ENCODE measurements at regions of chr5 and their contacts with region 1.

Region 1: DNA sequence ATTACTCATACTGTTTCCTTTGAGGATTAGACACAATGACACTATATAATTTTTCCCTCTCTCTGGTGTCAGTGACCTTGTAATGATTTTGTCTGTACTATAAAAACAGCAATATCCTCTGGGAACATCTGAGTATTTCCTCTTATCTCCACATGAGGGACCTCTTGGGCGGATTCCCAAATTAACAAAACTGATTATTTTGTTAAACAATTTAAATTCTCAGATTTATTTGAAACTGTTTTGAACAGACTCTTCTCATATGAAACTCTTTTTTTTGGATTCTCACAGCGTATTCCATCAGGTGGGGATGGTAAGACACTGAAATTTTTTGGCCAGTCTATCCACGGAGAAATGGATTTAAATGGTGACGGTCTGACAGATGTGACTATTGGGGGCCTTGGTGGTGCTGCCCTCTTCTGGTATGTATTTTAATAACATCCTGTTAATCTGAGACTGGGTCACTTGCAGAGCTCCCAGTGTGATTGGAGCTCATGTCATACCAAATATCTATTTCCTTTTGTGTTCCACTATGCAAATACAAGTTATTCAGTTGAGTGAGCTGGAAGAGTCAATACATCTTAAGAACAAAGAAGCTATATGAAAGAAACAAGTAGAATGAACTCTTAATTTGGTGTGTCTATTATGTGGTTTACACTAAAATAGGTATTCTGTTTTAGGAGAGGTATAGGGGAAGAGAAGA is 73.8 kb upstream of the ITGA2 start:
- DNase-seq: peak; percentile 82
- H3K4me3 Mint-ChIP-seq: peak overlapping the region; percentile 68
- H3K27ac Mint-ChIP-seq: no peak overlapping the region
- H3K4me1 Mint-ChIP-seq: no peaks in the 10 kb centered on the region
- H3K27me3 Mint-ChIP-seq: no peaks in the 10 kb centered on the region
- CTCF ChIP-seq: peak; percentile 78

Region 2: GRCh38 chr5:52693280-52693679 is 222.0 kb before region 1 on chr5:
- CTCF ChIA-PET with region 1: interaction called, 77 read pairs
- POLR2A ChIA-PET with region 1: interaction called, 5 read pairs
- intact Hi-C with region 1: loop called (anchors 1 kb)
- DNase-seq: peak; percentile 55
- H3K4me3 Mint-ChIP-seq: no peak overlapping the region
- H3K27ac Mint-ChIP-seq: no peak overlapping the region
- H3K4me1 Mint-ChIP-seq: no peaks in the 10 kb centered on the region
- H3K27me3 Mint-ChIP-seq: peaks cover 57% of the 10 kb centered on the region
- CTCF ChIP-seq: peak; percentile 41

Region 3: GRCh38 chr5:52787600-52788504 is 127.5 kb before region 1 on chr5 and contains the starts of genes ITGA1 and PELO:
- CTCF ChIA-PET with region 1: interaction called, 18 read pairs
- POLR2A ChIA-PET with region 1: interaction called, 4 read pairs
- intact Hi-C with region 1: loop called (anchors 1 kb)
- DNase-seq: peak; percentile 83
- H3K4me3 Mint-ChIP-seq: peak within 1 kb of the TSS; percentile 94
- H3K27ac Mint-ChIP-seq: peak within 1 kb of the TSS; percentile 72
- H3K4me1 Mint-ChIP-seq: peaks cover 28% of the 10 kb centered on the region
- H3K27me3 Mint-ChIP-seq: no peaks in the 10 kb centered on the region
- CTCF ChIP-seq: no peak
- total RNA-seq, gene ITGA1: 5.3 and 7.7 TPM in 2 replicates
- total RNA-seq, gene PELO: 22.5 and 23.1 TPM in 2 replicates

Region 4: GRCh38 chr5:52864371-52864770 is 51.0 kb before region 1 on chr5:
- CTCF ChIA-PET with region 1: interaction called, 10 read pairs
- POLR2A ChIA-PET with region 1: no interaction called
- intact Hi-C with region 1: no loop called
- DNase-seq: peak; percentile 53
- H3K4me3 Mint-ChIP-seq: no peak overlapping the region
- H3K27ac Mint-ChIP-seq: peak overlapping the region; percentile 27
- H3K4me1 Mint-ChIP-seq: peaks cover 28% of the 10 kb centered on the region
- H3K27me3 Mint-ChIP-seq: no peaks in the 10 kb centered on the region
- CTCF ChIP-seq: no peak

Region 5: GRCh38 chr5:52956915-52957747 is 41.8 kb after region 1 on chr5:
- CTCF ChIA-PET with region 1: no interaction called
- POLR2A ChIA-PET with region 1: no interaction called
- intact Hi-C with region 1: no loop called
- DNase-seq: no peak
- H3K4me3 Mint-ChIP-seq: no peak overlapping the region
- H3K27ac Mint-ChIP-seq: no peak overlapping the region
- H3K4me1 Mint-ChIP-seq: peaks cover 15% of the 10 kb centered on the region
- H3K27me3 Mint-ChIP-seq: no peaks in the 10 kb centered on the region
- CTCF ChIP-seq: no peak

Region 6: GRCh38 chr5:53160895-53161294 is 245.6 kb after region 1 on chr5:
- CTCF ChIA-PET with region 1: no interaction called
- POLR2A ChIA-PET with region 1: no interaction called
- intact Hi-C with region 1: no loop called
- DNase-seq: no peak
- H3K4me3 Mint-ChIP-seq: no peak overlapping the region
- H3K27ac Mint-ChIP-seq: no peak overlapping the region
- H3K4me1 Mint-ChIP-seq: no peaks in the 10 kb centered on the region
- H3K27me3 Mint-ChIP-seq: no peaks in the 10 kb centered on the region
- CTCF ChIP-seq: no peak

Region 7: GRCh38 chr5:53343187-53343586 is 427.9 kb after region 1 on chr5:
- CTCF ChIA-PET with region 1: no interaction called
- POLR2A ChIA-PET with region 1: no interaction called
- intact Hi-C with region 1: no loop called
- DNase-seq: peak; percentile 96
- H3K4me3 Mint-ChIP-seq: no peak overlapping the region
- H3K27ac Mint-ChIP-seq: peak overlapping the region; percentile 39
- H3K4me1 Mint-ChIP-seq: peaks cover 29% of the 10 kb centered on the region
- H3K27me3 Mint-ChIP-seq: no peaks in the 10 kb centered on the region
- CTCF ChIP-seq: no peak

Region 8: GRCh38 chr5:53792338-53792737 is 877.0 kb after region 1 on chr5:
- CTCF ChIA-PET with region 1: no interaction called
- POLR2A ChIA-PET with region 1: no interaction called
- intact Hi-C with region 1: no loop called
- DNase-seq: no peak
- H3K4me3 Mint-ChIP-seq: no peak overlapping the region
- H3K27ac Mint-ChIP-seq: no peak overlapping the region
- H3K4me1 Mint-ChIP-seq: no peaks in the 10 kb centered on the region
- H3K27me3 Mint-ChIP-seq: no peaks in the 10 kb centered on the region
- CTCF ChIP-seq: no peak

Measured in MCF 10A (cell line).